Activated CD4-positive, alpha-beta T cell treated with anti-CD3 and anti-CD28 coated beads for 36 hours (primary cell): ENCODE measurements at regions of chr6 and their contacts with region 1.

Region 1: GRCh38 chr6:127266178-127266891 is at the start of gene RNF146:
- DNase-seq: peak; percentile 82
- ATAC-seq: peak; percentile 77
- H3K4me3 Mint-ChIP-seq: peak within 1 kb of the TSS; percentile 93
- H3K27ac Mint-ChIP-seq: peak within 1 kb of the TSS; percentile 100
- H3K4me1 Mint-ChIP-seq: peaks cover 28% of the 10 kb centered on the region
- H3K27me3 Mint-ChIP-seq: no peaks in the 10 kb centered on the region
- total RNA-seq, gene RNF146: 14.2 to 14.4 TPM

Region 2: DNA sequence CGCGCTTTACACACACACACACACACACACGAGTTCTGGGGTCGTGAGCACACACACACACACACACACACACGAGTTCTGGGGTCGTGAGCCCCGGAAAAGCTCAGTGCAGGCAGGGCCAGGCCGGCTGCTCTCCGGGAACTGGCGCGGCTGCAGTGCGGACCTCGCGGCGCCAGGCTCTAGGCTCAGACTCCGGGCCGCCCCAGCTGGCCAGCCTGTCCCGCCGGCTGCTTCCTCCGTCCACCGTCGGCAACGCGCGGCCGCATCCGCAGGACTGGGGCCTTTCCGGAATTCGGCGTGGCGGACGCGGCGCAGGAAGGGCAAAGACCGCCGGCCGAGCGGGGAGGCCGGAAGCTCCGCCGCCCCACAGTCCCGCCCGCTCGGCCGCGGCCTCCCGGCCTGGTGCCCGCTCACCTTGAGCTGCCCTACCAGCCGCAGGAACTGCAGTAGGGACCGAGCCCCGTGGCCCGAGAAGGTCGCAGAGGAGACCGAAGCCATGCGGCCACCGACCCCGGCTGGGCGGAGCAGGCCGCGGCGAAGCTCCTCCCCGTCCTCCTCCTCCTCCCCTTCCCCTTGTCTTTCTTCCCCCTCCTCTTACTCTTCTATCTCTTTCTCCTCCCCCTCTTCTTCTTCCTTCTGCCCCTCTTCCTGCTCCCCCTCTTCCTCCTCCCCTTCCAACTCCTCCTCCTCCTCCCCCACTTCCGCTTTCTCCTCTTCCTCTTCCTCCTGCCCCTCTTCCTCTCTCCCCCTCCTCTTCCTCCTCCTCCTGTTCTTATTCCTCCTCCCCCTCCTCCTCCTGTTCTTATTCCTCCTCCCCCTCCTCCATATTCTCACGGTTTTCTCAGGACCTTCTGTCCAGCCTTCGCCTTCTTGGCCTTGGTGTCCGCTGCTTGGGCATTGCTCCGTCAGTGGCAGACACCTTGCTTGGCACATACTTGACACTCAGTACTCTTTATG is 1964.6 kb before region 1 on chr6 and contains the start of gene HDDC2:
- CTCF ChIA-PET with region 1: no interaction called
- POLR2A ChIA-PET with region 1: no interaction called
- intact Hi-C with region 1: loop called in 1 of 2 experiments (anchors 10 kb)
- DNase-seq: peak; percentile 64
- ATAC-seq: peak; percentile 79
- H3K4me3 Mint-ChIP-seq: peak within 1 kb of the TSS; percentile 94
- H3K27ac Mint-ChIP-seq: peak within 1 kb of the TSS; percentile 98
- H3K4me1 Mint-ChIP-seq: peaks cover 46% of the 10 kb centered on the region
- H3K27me3 Mint-ChIP-seq: no peaks in the 10 kb centered on the region
- total RNA-seq, gene HDDC2: 96.7 to 120 TPM

Region 3: GRCh38 chr6:125986300-125987025 is 1279.9 kb before region 1 on chr6 and contains the start of gene TRMT11:
- CTCF ChIA-PET with region 1: no interaction called
- POLR2A ChIA-PET with region 1: no interaction called
- intact Hi-C with region 1: loop called in 1 of 2 experiments (anchors 10 kb)
- DNase-seq: peak; percentile 89
- ATAC-seq: peak; percentile 96
- H3K4me3 Mint-ChIP-seq: no peak within 1 kb of the TSS
- H3K27ac Mint-ChIP-seq: peak within 1 kb of the TSS; percentile 20
- H3K4me1 Mint-ChIP-seq: peaks cover 7% of the 10 kb centered on the region
- H3K27me3 Mint-ChIP-seq: no peaks in the 10 kb centered on the region
- total RNA-seq, gene TRMT11: 33.4 to 40.5 TPM

Region 4: DNA sequence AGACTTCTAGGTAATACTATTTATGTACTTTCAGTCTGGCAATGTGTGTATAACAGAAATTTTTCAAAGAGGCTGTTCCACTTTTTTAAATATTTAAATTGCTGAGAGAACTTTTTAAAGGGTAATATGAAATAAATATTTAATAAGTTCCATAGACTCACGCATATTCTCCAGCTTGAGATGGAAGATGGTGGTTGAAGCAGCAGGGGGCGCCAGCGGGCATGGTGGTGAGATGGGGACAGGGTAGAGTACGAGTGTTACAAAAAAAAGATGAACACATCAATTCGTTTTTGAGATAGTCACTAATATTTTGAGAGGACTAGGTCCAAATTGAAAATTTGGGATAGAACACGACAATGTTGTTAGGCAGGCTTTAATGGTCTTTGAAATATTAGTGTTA is 79.4 kb before region 1 on chr6:
- CTCF ChIA-PET with region 1: interaction called, 27 read pairs
- POLR2A ChIA-PET with region 1: no interaction called
- intact Hi-C with region 1: loop called (anchors 1 kb)
- DNase-seq: peak; percentile 87
- ATAC-seq: peak; percentile 72
- H3K4me3 Mint-ChIP-seq: no peak overlapping the region
- H3K27ac Mint-ChIP-seq: no peak overlapping the region
- H3K4me1 Mint-ChIP-seq: no peaks in the 10 kb centered on the region
- H3K27me3 Mint-ChIP-seq: peaks cover 5% of the 10 kb centered on the region

Region 5: DNA sequence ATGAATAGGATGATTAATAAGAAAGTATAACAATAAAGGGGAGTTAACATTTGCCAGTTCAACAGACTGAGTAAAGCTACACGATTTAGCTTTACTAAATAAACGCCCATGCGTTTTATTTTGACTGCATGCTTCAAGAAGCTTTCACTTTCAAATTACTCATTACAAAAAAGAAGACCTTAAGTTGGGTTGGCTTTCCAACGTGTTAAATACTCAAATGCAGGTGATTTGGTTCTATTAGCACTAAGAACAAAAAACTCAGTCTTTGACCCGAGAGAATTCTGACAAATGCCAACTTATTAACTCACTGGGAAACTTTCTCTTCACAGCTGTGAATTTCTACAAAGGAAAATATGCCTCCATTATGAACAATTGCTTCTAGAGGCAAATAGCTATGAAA is 25.2 kb after region 1 on chr6:
- CTCF ChIA-PET with region 1: interaction called, 13 read pairs
- POLR2A ChIA-PET with region 1: interaction called, 3 read pairs
- intact Hi-C with region 1: loop called (anchors 1 to 2 kb)
- DNase-seq: no peak
- ATAC-seq: peak; percentile 71
- H3K4me3 Mint-ChIP-seq: peak overlapping the region; percentile 11
- H3K27ac Mint-ChIP-seq: no peak overlapping the region
- H3K4me1 Mint-ChIP-seq: peaks cover 45% of the 10 kb centered on the region
- H3K27me3 Mint-ChIP-seq: no peaks in the 10 kb centered on the region

Region 6: DNA sequence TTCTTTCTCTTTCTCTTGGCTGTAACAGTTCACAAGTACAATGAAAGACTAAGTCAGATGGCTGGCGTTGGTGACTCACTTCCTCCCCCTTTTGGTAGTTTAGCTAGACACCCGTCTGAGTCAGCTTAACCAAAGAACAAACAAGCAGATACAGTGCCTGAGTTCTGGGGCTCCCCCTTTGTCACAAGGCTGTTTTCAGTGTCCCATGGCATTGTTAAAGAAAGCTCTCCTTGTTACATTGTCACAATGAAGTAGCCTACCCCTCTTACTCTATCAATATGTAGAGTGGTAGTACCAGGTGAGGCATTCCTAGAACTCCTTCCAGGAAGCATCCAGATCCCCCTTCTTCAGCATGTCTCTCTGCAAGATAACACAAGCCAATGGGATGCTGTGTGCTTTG is 154.2 kb after region 1 on chr6:
- CTCF ChIA-PET with region 1: interaction called, 7 read pairs
- POLR2A ChIA-PET with region 1: no interaction called
- intact Hi-C with region 1: loop called in 1 of 2 experiments (anchors 1 kb)
- DNase-seq: peak; percentile 89
- ATAC-seq: peak; percentile 99
- H3K4me3 Mint-ChIP-seq: peak overlapping the region; percentile 28
- H3K27ac Mint-ChIP-seq: peak overlapping the region; percentile 75
- H3K4me1 Mint-ChIP-seq: peaks cover 23% of the 10 kb centered on the region
- H3K27me3 Mint-ChIP-seq: no peaks in the 10 kb centered on the region

Region 7: GRCh38 chr6:127436578-127437110 is 170.3 kb after region 1 on chr6:
- CTCF ChIA-PET with region 1: no interaction called
- POLR2A ChIA-PET with region 1: no interaction called
- intact Hi-C with region 1: no loop called
- DNase-seq: no peak
- ATAC-seq: no peak
- H3K4me3 Mint-ChIP-seq: no peak overlapping the region
- H3K27ac Mint-ChIP-seq: no peak overlapping the region
- H3K4me1 Mint-ChIP-seq: no peaks in the 10 kb centered on the region
- H3K27me3 Mint-ChIP-seq: peaks cover 13% of the 10 kb centered on the region